ENCODE measurements at regions of chr4 and their contacts with region 1.

Region 1: DNA sequence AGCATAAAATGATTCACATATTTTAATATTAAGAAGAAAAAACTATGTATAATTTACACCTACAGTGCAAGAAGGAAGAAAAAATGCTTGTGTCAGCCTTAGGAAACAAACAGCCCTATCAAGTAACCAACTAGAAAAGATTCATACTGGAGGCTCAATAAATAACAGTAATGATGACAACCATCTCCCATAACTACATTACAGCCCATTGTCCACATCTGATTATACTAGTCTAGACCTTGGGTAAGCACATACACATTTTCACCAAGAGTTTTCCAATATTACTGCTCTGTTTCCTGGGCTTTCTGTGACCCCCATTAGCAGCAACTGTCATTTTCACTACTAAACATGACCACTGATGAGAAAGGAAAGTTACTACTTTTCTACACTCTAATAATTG is 169.7 kb downstream of the MAB21L2 start:
- DNase-seq: no peak
- ATAC-seq: no peak
- H3K4me3 ChIP-seq: no peak overlapping the region
- H3K27ac ChIP-seq: no peak overlapping the region
- H3K4me1 ChIP-seq: no peaks in the 10 kb centered on the region
- H3K27me3 ChIP-seq: no peaks in the 10 kb centered on the region
- CTCF ChIP-seq: no peak
- POLR2A ChIP-seq: no peak
- RAD21 ChIP-seq: no peak

Region 2: GRCh38 chr4:150909116-150909515 is 157.5 kb after region 1 on chr4:
- CTCF ChIA-PET with region 1: no interaction called
- POLR2A ChIA-PET with region 1: no interaction called
- dilution Hi-C with region 1: no loop called
- in situ Hi-C with region 1: no loop called
- intact Hi-C with region 1: no loop called
- DNase-seq: no peak
- ATAC-seq: no peak
- H3K4me3 ChIP-seq: no peak overlapping the region
- H3K27ac ChIP-seq: no peak overlapping the region
- H3K4me1 ChIP-seq: no peaks in the 10 kb centered on the region
- H3K27me3 ChIP-seq: no peaks in the 10 kb centered on the region
- CTCF ChIP-seq: no peak
- POLR2A ChIP-seq: no peak
- RAD21 ChIP-seq: no peak

Region 3: GRCh38 chr4:150942539-150942938 is 190.9 kb after region 1 on chr4:
- CTCF ChIA-PET with region 1: no interaction called
- POLR2A ChIA-PET with region 1: interaction called, 15 read pairs
- dilution Hi-C with region 1: no loop called
- in situ Hi-C with region 1: no loop called
- intact Hi-C with region 1: no loop called
- DNase-seq: no peak
- ATAC-seq: no peak
- H3K4me3 ChIP-seq: no peak overlapping the region
- H3K27ac ChIP-seq: no peak overlapping the region
- H3K4me1 ChIP-seq: no peaks in the 10 kb centered on the region
- H3K27me3 ChIP-seq: no peaks in the 10 kb centered on the region
- CTCF ChIP-seq: no peak
- POLR2A ChIP-seq: no peak
- RAD21 ChIP-seq: no peak

Region 4: GRCh38 chr4:151715881-151716280 is 964.2 kb after region 1 on chr4:
- CTCF ChIA-PET with region 1: no interaction called
- POLR2A ChIA-PET with region 1: no interaction called
- dilution Hi-C with region 1: no loop called
- in situ Hi-C with region 1: no loop called
- intact Hi-C with region 1: no loop called
- DNase-seq: no peak
- ATAC-seq: no peak
- H3K4me3 ChIP-seq: no peak overlapping the region
- H3K27ac ChIP-seq: no peak overlapping the region
- H3K4me1 ChIP-seq: no peaks in the 10 kb centered on the region
- H3K27me3 ChIP-seq: no peaks in the 10 kb centered on the region
- CTCF ChIP-seq: no peak
- POLR2A ChIP-seq: no peak
- RAD21 ChIP-seq: no peak